ENCODE measurements at regions of chr16 and their contacts with region 1.

Region 1: GRCh38 chr16:13816701-13817100 is 103.3 kb upstream of the ERCC4 start:
- DNase-seq: no peak
- H3K4me3 ChIP-seq: no peak overlapping the region
- H3K27ac ChIP-seq: no peak overlapping the region
- H3K4me1 ChIP-seq: no peaks in the 10 kb centered on the region
- H3K27me3 ChIP-seq: peaks cover 62% of the 10 kb centered on the region
- CTCF ChIP-seq: no peak

Region 2: DNA sequence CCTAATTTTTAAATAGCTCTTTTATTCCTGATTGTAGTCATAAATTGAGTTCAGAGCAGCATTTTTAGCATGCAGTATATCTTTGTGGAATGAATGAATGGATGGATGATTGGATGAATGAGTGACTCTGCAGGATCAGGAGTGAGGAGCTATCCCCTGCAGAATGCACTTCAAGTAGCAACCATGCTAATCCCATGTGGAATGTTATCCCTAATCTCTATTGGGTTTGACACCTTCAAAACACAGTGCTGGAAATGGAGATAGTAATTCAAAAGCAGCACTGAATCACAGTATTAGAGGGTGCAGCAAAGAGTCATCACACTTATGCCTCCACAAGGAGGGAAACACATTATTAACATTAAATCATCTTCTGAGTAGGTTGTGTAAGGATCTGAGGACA is 413.4 kb before region 1 on chr16:
- CTCF ChIA-PET with region 1: no interaction called
- POLR2A ChIA-PET with region 1: interaction called, 10 read pairs
- intact Hi-C with region 1: no loop called
- DNase-seq: no peak
- H3K4me3 ChIP-seq: no peak overlapping the region
- H3K27ac ChIP-seq: no peak overlapping the region
- H3K4me1 ChIP-seq: no peaks in the 10 kb centered on the region
- H3K27me3 ChIP-seq: no peaks in the 10 kb centered on the region
- CTCF ChIP-seq: no peak

Region 3: GRCh38 chr16:13779676-13780075 is 37.0 kb before region 1 on chr16:
- CTCF ChIA-PET with region 1: no interaction called
- POLR2A ChIA-PET with region 1: no interaction called
- intact Hi-C with region 1: no loop called
- DNase-seq: no peak
- H3K4me3 ChIP-seq: no peak overlapping the region
- H3K27ac ChIP-seq: no peak overlapping the region
- H3K4me1 ChIP-seq: no peaks in the 10 kb centered on the region
- H3K27me3 ChIP-seq: peaks cover 42% of the 10 kb centered on the region; the same call in 1 of the 2 replicates
- CTCF ChIP-seq: no peak

Region 4: GRCh38 chr16:13806671-13807070 is 10.0 kb before region 1 on chr16:
- CTCF ChIA-PET with region 1: no interaction called
- POLR2A ChIA-PET with region 1: no interaction called
- intact Hi-C with region 1: no loop called
- DNase-seq: no peak
- H3K4me3 ChIP-seq: no peak overlapping the region
- H3K27ac ChIP-seq: no peak overlapping the region
- H3K4me1 ChIP-seq: no peaks in the 10 kb centered on the region
- H3K27me3 ChIP-seq: peaks cover 83% of the 10 kb centered on the region
- CTCF ChIP-seq: no peak

Region 5: DNA sequence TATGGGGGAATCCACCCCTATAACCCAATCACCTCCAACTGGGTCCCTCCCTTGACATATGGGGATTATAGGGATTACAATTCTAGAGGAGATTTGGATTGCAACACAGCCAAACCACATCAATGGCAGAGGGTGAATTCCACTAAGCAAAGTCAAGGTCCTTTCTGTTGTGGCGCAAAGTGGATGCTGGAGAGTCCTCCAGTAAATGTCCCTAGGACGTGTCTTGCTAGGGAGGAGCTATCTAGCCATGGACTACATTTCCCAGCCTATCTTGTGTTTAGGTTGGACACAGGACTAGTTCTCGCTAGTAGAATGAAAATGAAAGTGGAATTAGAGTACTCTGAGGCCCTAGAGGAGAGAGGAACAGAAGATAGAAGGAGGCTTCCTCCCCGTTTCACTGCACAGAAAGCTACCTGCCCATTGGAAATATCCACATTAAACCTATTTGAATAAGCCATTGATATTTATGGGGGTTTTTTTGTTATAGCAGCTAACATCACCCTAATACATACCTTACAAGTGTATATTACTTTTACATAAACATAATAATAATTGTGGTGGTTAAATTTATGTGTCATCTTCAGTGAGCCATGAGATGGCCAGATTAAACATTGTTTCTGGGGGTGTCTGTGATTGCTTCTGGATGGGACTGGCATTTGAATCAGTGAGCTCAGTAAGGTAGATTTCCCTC is 46.5 kb after region 1 on chr16:
- CTCF ChIA-PET with region 1: no interaction called
- POLR2A ChIA-PET with region 1: no interaction called
- intact Hi-C with region 1: no loop called
- DNase-seq: no peak
- H3K4me3 ChIP-seq: no peak overlapping the region
- H3K27ac ChIP-seq: no peak overlapping the region
- H3K4me1 ChIP-seq: no peaks in the 10 kb centered on the region
- H3K27me3 ChIP-seq: peaks cover 52% of the 10 kb centered on the region
- CTCF ChIP-seq: no peak